Activated CD4-positive, alpha-beta T cell treated with anti-CD3 and anti-CD28 coated beads for 36 hours (primary cell): ENCODE measurements at regions of chr16 and their contacts with region 1.

Region 1: DNA sequence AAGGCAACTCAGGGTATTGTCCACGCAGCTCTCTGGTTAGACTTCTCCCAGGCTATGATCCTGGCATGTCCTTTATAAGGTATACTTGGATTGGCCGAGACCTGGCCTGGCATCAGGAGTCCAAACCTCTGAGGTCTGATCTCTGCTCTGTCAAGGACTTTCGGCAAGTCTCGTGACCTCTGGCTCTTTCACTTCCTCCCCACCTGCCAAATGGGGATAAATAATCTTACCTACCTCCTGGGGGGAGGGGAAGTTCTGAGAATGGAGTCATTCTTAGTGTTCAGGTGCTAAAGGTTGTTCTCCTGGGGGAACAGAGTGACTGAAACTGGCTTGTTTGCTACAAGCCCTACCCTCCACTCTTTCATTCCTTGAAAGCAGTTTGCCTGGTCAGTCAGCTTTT is 7.6 kb downstream of the ATXN1L start:
- DNase-seq: no peak
- ATAC-seq: no peak
- H3K4me3 Mint-ChIP-seq: no peak overlapping the region
- H3K27ac Mint-ChIP-seq: peak overlapping the region; percentile 81
- H3K4me1 Mint-ChIP-seq: peaks cover 52% of the 10 kb centered on the region
- H3K27me3 Mint-ChIP-seq: no peaks in the 10 kb centered on the region

Region 2: DNA sequence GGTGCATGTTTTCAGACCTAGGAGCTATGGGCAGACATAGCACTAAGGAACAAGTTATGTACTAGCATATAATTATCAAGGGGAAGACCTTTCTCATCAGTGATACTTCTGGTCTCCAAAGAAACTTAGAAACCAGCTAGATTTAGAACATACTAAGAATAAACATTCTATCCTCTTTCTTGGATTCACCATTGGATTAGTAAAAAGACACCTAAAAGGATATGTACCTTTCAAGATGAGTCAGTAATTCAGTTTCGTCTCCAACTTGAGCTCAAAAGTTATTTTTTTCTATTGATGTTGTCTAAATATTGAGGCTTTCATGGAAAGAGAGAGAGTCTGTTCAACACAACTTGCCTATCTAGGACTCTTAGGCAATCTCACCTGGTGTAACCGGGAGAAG is 17.4 kb after region 1 on chr16:
- CTCF ChIA-PET with region 1: interaction called, 10 read pairs
- POLR2A ChIA-PET with region 1: no interaction called
- intact Hi-C with region 1: no loop called
- DNase-seq: no peak
- ATAC-seq: peak; percentile 20
- H3K4me3 Mint-ChIP-seq: no peak overlapping the region
- H3K27ac Mint-ChIP-seq: no peak overlapping the region
- H3K4me1 Mint-ChIP-seq: peaks cover 25% of the 10 kb centered on the region
- H3K27me3 Mint-ChIP-seq: no peaks in the 10 kb centered on the region

Region 3: DNA sequence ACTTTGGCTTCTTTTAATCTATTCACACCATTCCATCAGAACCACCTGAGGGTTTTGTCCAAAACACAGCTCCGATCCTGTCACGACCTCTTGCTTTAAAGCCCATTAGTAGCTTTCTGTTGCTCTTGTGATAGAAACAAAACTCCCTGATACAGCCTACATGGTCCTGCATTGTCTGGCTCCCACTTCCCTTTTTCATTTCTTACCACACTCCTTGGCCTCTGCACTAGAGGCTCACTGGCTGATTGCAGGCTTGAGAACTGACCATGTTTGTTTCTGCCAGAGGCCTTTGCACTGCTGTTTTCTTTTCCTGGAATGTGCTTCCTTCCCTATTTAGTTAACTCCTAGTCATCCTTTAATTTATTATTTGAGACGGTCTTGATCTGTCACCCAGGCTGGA is 65.6 kb after region 1 on chr16:
- CTCF ChIA-PET with region 1: no interaction called
- POLR2A ChIA-PET with region 1: no interaction called
- intact Hi-C with region 1: no loop called
- DNase-seq: no peak
- ATAC-seq: no peak
- H3K4me3 Mint-ChIP-seq: no peak overlapping the region
- H3K27ac Mint-ChIP-seq: no peak overlapping the region
- H3K4me1 Mint-ChIP-seq: peaks cover 21% of the 10 kb centered on the region
- H3K27me3 Mint-ChIP-seq: no peaks in the 10 kb centered on the region